Heart right ventricle (tissue), 16 donors: ENCODE measurements at regions of chr7 and their contacts with region 1.

Region 1: GRCh38 chr7:6350433-6351058 is 78.1 kb upstream of the CYTH3 start:
- DNase-seq: no peak
- ATAC-seq: no peak
- H3K4me3 ChIP-seq: no peak overlapping the region
- H3K27ac ChIP-seq: peak overlapping the region in 1 of 10 donors; percentile 27
- H3K4me1 ChIP-seq: peaks cover 0 to 32% (median 9%) of the 10 kb centered on the region in 9 donors
- H3K27me3 ChIP-seq: peaks cover 0 to 3% (median 0%) of the 10 kb centered on the region in 7 donors
- CTCF ChIP-seq: no peak

Region 2: DNA sequence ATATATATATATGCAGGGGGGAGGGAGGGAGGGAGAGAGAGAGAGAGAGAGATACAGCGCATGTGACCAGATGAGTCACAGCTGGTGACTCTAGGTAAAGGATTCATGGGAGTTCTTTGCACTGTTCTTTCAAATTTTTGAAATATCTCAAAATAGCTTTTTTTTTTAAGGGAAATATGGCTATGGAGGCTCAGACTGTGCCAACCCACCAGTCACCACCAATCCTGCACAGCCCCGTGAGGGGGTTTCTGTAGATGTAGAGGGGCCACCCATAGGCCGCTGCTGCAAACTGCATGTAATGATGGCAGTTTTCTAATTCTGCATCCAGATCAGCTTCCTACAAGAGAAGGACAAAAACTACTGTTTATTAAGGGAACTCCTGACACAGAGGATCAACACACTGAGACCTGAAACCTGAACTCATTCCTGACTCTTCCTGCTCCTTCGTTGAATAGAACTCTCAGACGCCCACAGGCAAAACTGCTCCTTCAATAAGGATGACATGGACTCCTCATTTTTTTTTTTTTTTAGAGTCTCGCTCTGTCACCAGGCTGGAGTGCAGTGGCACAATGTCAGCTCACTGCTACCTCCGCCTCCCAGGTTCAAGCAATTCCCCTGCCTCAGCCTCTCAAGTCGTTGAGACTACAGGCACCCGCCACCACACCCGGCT is 79.9 kb after region 1 on chr7:
- intact Hi-C with region 1: loop called in 2 of 10 experiments (anchors 5 to 10 kb)
- DNase-seq: no peak
- ATAC-seq: no peak
- H3K4me3 ChIP-seq: no peak overlapping the region
- H3K27ac ChIP-seq: peak overlapping the region in 1 of 10 donors; percentile 40
- H3K4me1 ChIP-seq: peaks cover 0 to 44% (median 3%) of the 10 kb centered on the region in 9 donors
- H3K27me3 ChIP-seq: no peaks in the 10 kb centered on the region
- CTCF ChIP-seq: no peak